Activated CD4-positive, alpha-beta T cell treated with anti-CD3 and anti-CD28 coated beads, Interleukin-2, amount 10 ng/mL, durations not matched to agents 7 days and 5 days (primary cell): ENCODE measurements at regions of chr1 and their contacts with region 1.

Region 1: GRCh38 chr1:51296383-51297357 is 33.7 kb downstream of the TTC39A start:
- DNase-seq: peak; percentile 76
- H3K4me3 Mint-ChIP-seq: peak overlapping the region; percentile 59
- H3K27ac Mint-ChIP-seq: peak overlapping the region; percentile 77
- H3K4me1 Mint-ChIP-seq: peaks cover 30% of the 10 kb centered on the region
- H3K27me3 Mint-ChIP-seq: no peaks in the 10 kb centered on the region

Region 2: GRCh38 chr1:51313961-51314777 is 17.5 kb after region 1 on chr1:
- CTCF ChIA-PET with region 1: interaction called, 16 read pairs
- POLR2A ChIA-PET with region 1: no interaction called
- DNase-seq: no peak
- H3K4me3 Mint-ChIP-seq: no peak overlapping the region
- H3K27ac Mint-ChIP-seq: no peak overlapping the region
- H3K4me1 Mint-ChIP-seq: peaks cover 11% of the 10 kb centered on the region
- H3K27me3 Mint-ChIP-seq: peaks cover 2% of the 10 kb centered on the region

Region 3: GRCh38 chr1:51535006-51535592 is 238.4 kb after region 1 on chr1:
- CTCF ChIA-PET with region 1: no interaction called
- POLR2A ChIA-PET with region 1: no interaction called
- DNase-seq: peak; percentile 46
- H3K4me3 Mint-ChIP-seq: no peak overlapping the region
- H3K27ac Mint-ChIP-seq: no peak overlapping the region
- H3K4me1 Mint-ChIP-seq: peaks cover 11% of the 10 kb centered on the region
- H3K27me3 Mint-ChIP-seq: no peaks in the 10 kb centered on the region